WTC11 (cell line): ENCODE measurements at regions of chr5 and their contacts with region 1.

Region 1: DNA sequence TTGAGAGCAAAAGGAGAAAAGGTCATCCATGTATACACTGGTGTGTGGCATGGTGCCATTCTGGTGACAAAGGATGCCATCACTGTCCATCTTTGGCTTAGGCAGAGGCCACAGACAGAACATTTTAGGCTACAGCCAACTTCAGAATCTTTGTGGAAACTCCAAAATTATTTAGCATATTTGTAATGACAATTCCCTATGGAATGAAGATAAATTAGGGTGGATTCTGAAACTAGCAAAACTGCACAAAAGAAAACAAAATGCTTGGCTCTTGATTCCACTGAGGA is 92.5 kb downstream of the FBXW11 start:
- DNase-seq: no peak
- ATAC-seq: no peak
- H3K4me3 Mint-ChIP-seq: no peak overlapping the region
- H3K27ac Mint-ChIP-seq: peak overlapping the region; percentile 69; the same call in 1 of the 2 replicates
- H3K4me1 Mint-ChIP-seq: peaks cover 44% of the 10 kb centered on the region
- H3K27me3 Mint-ChIP-seq: no peaks in the 10 kb centered on the region
- CTCF ChIP-seq: no peak

Region 2: GRCh38 chr5:171845857-171846256 is 68.1 kb before region 1 on chr5:
- CTCF ChIA-PET with region 1: no interaction called
- POLR2A ChIA-PET with region 1: no interaction called
- DNase-seq: no peak
- ATAC-seq: no peak
- H3K4me3 Mint-ChIP-seq: no peak overlapping the region
- H3K27ac Mint-ChIP-seq: no peak overlapping the region
- H3K4me1 Mint-ChIP-seq: peaks cover 5% of the 10 kb centered on the region
- H3K27me3 Mint-ChIP-seq: 0 out of 2 replicates have a peak, but pooled peaks cover 3% of the 10 kb centered on the region
- CTCF ChIP-seq: no peak

Region 3: GRCh38 chr5:171898386-171898785 is 15.5 kb before region 1 on chr5:
- CTCF ChIA-PET with region 1: interaction called, 13 read pairs
- POLR2A ChIA-PET with region 1: no interaction called
- DNase-seq: no peak
- ATAC-seq: no peak
- H3K4me3 Mint-ChIP-seq: no peak overlapping the region
- H3K27ac Mint-ChIP-seq: no peak overlapping the region; the same call in 1 of the 2 replicates
- H3K4me1 Mint-ChIP-seq: peaks cover 14% of the 10 kb centered on the region
- H3K27me3 Mint-ChIP-seq: no peaks in the 10 kb centered on the region
- CTCF ChIP-seq: no peak

Region 4: DNA sequence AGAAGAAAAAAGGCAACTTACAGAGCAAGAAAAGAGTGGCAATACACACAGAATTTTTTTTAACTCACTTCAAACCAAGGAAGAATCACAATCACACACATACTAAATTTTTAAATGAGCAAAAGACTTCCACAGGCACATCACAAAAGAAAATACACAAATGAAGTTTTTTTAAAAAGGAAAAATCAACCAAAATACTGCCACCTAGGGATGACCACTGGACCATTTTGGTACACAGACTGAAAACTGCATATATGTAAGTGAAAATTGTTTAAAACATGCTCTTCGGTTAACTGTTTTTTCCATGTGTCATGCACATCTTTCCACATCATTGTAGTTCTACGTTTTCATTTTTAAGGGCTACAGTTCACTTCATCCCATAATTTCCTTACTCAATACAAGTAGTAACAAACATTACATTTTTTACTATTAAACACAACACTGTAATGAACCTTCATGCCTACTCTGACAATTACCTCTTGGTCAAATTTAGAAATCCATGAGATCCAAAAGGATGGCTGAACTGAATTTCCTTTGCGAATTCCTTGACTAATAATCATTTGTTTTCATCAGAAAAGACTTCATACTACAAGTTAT is 13.5 kb after region 1 on chr5:
- CTCF ChIA-PET with region 1: interaction called, 22 read pairs
- POLR2A ChIA-PET with region 1: interaction called, 4 read pairs
- DNase-seq: no peak
- ATAC-seq: no peak
- H3K4me3 Mint-ChIP-seq: no peak overlapping the region
- H3K27ac Mint-ChIP-seq: no peak overlapping the region
- H3K4me1 Mint-ChIP-seq: peaks cover 47% of the 10 kb centered on the region
- H3K27me3 Mint-ChIP-seq: no peaks in the 10 kb centered on the region
- CTCF ChIP-seq: no peak

Region 5: DNA sequence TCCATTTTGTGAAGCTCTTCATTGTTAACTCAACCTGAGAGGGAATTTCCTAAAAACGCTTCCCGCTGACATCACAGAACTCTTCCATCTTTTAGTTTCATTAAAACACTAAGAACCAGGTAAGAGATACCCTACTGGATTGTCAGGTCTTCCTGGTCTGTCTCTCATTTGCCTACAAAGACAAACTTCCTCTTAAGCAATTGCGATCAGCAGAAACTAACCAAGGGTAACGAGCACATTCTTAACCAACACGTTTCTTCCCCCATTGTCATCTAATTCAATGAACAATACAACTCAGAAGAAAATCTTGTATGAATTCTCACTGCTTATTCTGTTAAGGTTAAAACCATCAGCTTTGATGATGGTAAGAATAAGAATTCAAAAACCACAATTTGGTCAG is 85.9 kb after region 1 on chr5:
- CTCF ChIA-PET with region 1: interaction called, 65 read pairs
- POLR2A ChIA-PET with region 1: no interaction called
- DNase-seq: no peak
- ATAC-seq: no peak
- H3K4me3 Mint-ChIP-seq: peak overlapping the region; percentile 18
- H3K27ac Mint-ChIP-seq: peak overlapping the region; percentile 73
- H3K4me1 Mint-ChIP-seq: peaks cover 82% of the 10 kb centered on the region
- H3K27me3 Mint-ChIP-seq: no peaks in the 10 kb centered on the region
- CTCF ChIP-seq: no peak

Region 6: DNA sequence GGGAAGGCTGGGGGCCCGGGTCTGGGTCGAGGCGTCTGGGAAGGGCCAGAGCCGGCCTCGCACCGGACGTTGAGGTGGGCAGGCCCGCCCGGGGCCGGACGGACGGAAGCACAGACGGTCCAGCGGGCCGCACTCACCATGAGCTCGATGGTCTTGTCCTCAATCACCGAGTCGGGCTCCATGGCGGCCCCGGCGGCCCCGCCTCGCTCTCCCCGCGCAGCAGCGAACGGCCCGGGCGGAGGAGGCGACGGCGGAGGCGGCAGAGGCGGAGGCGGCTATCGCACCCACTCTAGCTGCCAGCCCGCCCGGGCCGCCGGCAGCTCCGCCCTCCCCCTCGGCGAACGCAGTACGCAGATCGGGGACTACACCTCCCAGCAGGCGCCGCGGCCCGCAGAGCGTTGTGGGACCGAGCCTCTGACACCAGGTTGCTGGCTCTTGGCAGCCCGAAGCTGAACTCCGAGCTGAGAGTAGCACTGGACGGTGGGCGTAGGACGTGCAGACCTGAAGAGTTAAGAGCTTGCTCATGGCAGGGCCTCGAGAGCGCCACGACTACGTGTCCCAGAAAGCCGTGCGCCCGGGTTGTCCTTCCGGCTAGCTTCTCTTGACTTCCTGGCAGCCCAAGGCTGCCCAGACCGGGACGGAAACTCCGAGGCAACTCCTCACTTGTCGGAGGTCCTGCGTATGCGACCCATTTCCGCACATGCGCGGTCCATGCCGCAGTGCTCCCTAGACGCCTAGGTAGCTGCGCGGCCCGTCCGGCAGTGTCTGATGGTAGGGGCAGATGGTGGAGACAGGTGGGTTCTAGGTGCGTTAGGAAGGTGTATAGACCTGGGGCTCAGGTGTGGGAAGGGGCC is 92.6 kb after region 1 on chr5 and contains the start of gene FBXW11:
- CTCF ChIA-PET with region 1: interaction called, 65 read pairs
- POLR2A ChIA-PET with region 1: interaction called, 4 read pairs
- DNase-seq: peak; percentile 96
- ATAC-seq: peak; percentile 82
- H3K4me3 Mint-ChIP-seq: peak within 1 kb of the TSS; percentile 93
- H3K27ac Mint-ChIP-seq: peak within 1 kb of the TSS; percentile 95
- H3K4me1 Mint-ChIP-seq: peaks cover 68% of the 10 kb centered on the region
- H3K27me3 Mint-ChIP-seq: peaks cover 16% of the 10 kb centered on the region
- CTCF ChIP-seq: no peak
- total RNA-seq, gene FBXW11: 48.4 to 52.2 TPM (median 51.2 TPM) in 3 replicates

Region 7: DNA sequence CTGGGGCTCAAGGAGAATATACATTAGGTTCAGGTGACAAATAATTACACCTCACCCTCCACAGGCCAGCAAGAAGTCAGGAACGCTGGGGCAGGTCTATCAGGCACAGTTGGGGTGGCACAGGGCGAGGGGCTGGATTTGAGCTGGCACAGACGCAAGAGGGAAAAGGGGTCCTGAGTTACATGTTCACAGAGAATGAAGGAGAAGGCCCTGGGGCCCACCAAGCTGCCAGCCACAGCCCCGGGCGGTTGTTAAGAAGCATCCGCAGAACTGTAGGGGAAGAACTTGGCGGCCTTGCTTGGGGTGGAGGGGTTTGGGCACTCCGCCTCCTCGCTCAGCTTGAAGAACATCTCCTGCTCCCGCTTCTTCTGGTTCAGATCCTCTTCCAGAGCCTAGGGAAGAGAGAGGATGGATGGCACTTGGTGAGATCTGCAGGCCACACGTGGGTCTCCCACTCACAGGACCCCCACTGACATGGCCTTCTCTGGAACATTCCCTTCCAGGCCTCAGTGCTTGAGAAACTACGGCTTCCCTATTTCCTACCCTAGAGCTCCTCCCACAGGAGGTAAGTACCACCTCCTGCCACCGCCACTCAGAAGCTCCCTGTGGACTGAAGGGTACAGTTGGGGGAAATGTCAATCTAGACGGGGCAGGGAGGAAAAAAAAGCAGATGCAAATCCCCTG is 130.8 kb after region 1 on chr5:
- CTCF ChIA-PET with region 1: interaction called, 74 read pairs
- POLR2A ChIA-PET with region 1: interaction called, 3 read pairs
- DNase-seq: no peak
- ATAC-seq: peak; percentile 81
- H3K4me3 Mint-ChIP-seq: no peak overlapping the region
- H3K27ac Mint-ChIP-seq: peak overlapping the region; percentile 87; the same call in 1 of the 2 replicates
- H3K4me1 Mint-ChIP-seq: peaks cover 27% of the 10 kb centered on the region
- H3K27me3 Mint-ChIP-seq: no peaks in the 10 kb centered on the region
- CTCF ChIP-seq: 0 out of 2 replicates have a peak, but pooled peaks have one; percentile 7